Ovary (tissue), 10 donors: ENCODE measurements at regions of chr4 and their contacts with region 1.

Region 1: DNA sequence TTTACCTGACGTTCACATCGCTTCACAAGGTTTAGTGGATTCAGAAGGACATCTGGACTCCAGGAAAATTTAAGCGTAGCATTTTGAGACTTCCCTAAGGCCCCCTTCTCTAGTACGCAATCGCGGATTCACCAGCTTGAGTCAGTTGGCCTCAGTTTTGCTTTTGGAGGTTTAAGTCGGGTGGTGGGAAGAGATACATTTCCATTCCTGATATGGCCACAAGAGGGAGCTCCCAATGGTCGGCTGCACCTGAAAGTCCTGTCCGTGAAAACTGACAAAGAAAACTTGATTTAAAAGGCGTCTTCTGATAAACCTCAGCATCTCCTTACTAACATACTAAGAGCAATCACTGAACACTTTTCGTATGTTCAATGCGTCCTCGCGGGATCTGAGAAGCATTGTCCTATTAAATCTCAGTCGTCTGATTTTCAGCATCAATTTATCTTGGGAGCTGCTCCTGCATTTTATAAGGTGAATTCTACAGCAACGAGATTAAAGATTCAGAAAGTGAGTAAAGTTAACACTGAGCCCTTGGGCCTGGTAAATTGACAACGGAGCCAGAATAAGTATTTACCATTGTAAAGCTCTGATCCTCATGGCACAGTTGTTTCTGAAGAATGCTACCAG is 50.6 kb downstream of the LGI2 start:
- DNase-seq: peak; percentile 32 to 65 (median 38)
- H3K4me3 ChIP-seq: no peak overlapping the region
- H3K27ac ChIP-seq: no peak overlapping the region
- H3K4me1 ChIP-seq: no peaks in the 10 kb centered on the region
- H3K27me3 ChIP-seq: no peaks in the 10 kb centered on the region
- CTCF ChIP-seq: peak; percentile 57 to 79 (median 65)
- EP300 ChIP-seq: no peak
- POLR2A ChIP-seq: no peak

Region 2: GRCh38 chr4:24392613-24393012 is 587.6 kb before region 1 on chr4:
- intact Hi-C with region 1: no loop called
- DNase-seq: no peak
- H3K4me3 ChIP-seq: no peak overlapping the region
- H3K27ac ChIP-seq: no peak overlapping the region
- H3K4me1 ChIP-seq: no peaks in the 10 kb centered on the region
- H3K27me3 ChIP-seq: no peaks in the 10 kb centered on the region
- CTCF ChIP-seq: no peak
- EP300 ChIP-seq: no peak
- POLR2A ChIP-seq: no peak

Region 3: DNA sequence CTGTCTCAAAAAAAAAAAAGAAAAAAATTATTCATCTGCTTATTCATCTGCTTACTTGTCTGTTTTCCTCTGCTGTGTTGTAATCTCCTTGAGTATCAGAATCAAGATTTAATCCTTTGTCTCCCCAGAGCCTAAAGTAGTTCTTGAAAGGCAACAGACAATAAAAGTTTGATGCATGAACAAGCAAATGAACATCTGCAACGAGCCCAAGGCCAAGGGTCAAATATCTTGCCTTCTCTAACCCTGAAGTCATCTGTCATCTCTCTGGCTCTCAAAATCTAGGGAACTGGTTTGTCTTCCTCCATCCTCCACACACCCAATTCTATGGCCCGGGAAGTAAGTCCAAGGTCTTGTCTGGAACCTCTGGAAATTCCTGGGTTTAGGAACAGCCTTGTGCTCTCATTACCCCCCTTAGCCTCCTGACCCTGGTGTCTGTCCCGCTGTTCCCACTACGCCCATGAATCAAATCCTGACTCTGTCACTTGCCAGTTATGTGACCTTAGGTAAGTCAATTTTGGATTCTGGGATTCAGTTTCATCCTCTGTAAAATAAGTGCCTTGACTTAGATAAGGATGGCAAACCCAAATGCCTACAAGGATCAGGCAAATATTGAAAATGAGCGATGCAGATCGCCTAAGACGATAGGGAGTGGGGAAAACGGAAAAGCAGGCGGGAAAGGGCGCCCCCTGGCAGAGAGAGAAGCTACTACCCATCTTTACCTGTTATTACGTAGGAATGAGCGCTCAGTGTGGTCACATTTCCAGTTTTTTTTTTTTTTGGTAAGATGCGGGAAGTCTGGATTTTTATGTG is 293.1 kb before region 1 on chr4:
- intact Hi-C with region 1: loop called in 1 of 4 experiments (anchors 10 kb)
- DNase-seq: no peak
- H3K4me3 ChIP-seq: no peak overlapping the region
- H3K27ac ChIP-seq: no peak overlapping the region
- H3K4me1 ChIP-seq: no peaks in the 10 kb centered on the region
- H3K27me3 ChIP-seq: no peaks in the 10 kb centered on the region
- CTCF ChIP-seq: no peak
- EP300 ChIP-seq: no peak
- POLR2A ChIP-seq: no peak

Region 4: DNA sequence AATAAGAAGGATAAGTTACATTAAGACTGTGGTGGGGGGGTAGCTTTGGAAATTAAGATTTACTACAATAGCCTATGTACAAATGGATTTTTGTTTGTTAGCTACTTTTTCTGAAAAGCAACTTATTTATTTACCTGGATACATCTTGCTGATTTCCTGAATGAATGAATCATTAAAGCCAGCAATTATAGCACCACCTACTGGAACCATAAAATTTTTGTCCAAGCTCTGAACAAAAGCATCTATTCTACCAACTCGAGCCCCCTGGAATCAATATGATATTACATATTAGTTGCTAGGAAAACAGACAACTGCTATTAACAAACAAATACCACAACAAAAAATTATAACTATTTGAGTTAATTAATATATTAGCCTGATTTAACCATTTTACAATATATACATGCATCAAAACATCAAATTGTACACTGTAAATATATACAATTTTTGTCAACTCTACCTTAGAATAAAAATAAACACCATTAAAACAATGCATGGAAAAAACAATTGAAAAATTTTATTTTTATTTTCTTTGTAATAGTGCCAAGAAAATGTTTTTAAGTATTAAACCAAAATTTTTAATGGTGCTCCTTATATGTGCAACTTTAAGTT is 164.8 kb after region 1 on chr4:
- intact Hi-C with region 1: loop called in 1 of 4 experiments (anchors 10 kb)
- DNase-seq: no peak
- H3K4me3 ChIP-seq: no peak overlapping the region
- H3K27ac ChIP-seq: no peak overlapping the region
- H3K4me1 ChIP-seq: no peaks in the 10 kb centered on the region
- H3K27me3 ChIP-seq: no peaks in the 10 kb centered on the region
- CTCF ChIP-seq: peak in 1 of 3 donors; percentile 15
- EP300 ChIP-seq: no peak
- POLR2A ChIP-seq: no peak

Region 5: DNA sequence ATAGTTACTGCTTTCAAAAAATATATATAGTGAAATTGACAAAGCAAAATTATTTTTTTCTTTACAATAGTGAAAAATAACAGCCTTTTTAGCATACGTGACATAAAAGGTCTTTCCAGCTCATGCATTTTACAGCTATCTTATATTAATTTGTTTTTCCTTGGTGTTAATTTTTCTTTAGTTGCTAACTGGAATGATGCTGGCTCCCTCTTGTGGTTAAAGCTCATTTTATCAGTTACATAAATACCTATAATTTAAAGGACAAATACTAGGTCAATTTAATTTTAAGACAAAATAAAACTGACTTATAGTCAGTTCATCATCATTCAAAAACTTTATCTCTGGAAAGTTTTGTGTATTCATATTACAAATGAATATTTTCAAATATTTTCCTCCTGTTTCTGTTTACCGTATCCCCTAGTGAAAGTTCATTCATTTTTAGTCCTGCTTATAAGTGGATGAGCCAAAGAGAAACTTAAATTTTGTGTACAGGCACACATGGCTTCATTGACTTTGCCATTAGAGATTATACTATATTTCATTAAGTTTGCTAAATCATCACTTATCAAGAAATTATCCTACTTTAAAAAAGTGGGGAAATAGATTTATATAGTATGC is 386.9 kb after region 1 on chr4:
- intact Hi-C with region 1: loop called in 1 of 4 experiments (anchors 5 kb)
- DNase-seq: no peak
- H3K4me3 ChIP-seq: no peak overlapping the region
- H3K27ac ChIP-seq: no peak overlapping the region
- H3K4me1 ChIP-seq: no peaks in the 10 kb centered on the region
- H3K27me3 ChIP-seq: no peaks in the 10 kb centered on the region
- CTCF ChIP-seq: peak in 1 of 3 donors; percentile 45
- EP300 ChIP-seq: no peak
- POLR2A ChIP-seq: no peak

Region 6: DNA sequence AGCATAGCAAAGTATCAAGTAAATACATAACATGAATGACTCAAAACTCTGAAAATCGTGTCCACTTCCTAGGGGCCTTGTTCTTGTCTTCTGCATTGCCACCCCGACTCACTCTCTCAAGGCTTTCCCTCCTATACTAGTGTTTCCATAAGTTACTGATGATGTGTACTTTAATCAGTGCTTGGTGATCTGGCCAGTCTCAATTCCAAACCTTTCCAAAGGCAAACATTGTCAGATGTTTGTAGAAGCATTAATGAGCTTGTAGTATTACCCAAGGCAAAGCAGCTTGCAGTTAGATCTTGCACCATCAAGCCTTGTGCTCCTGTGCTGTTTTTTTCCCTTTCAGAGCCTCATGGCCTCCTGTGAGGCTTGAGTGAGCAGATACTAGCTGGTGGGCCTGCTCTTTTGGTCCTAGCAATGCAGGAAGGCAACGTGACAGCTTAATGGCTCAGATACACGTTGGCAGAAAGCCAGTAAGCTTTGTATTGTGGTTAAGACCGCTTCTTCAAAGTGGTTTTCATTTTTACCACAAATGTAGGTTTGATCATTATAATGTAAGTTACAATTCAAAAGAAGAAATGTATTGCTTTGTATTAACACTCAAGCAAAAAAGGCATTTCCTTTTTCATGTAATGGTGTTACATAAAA is 1392.5 kb after region 1 on chr4:
- intact Hi-C with region 1: no loop called
- DNase-seq: no peak
- H3K4me3 ChIP-seq: no peak overlapping the region
- H3K27ac ChIP-seq: no peak overlapping the region
- H3K4me1 ChIP-seq: peaks cover 4% of the 10 kb centered on the region
- H3K27me3 ChIP-seq: no peaks in the 10 kb centered on the region
- CTCF ChIP-seq: no peak
- EP300 ChIP-seq: no peak
- POLR2A ChIP-seq: no peak